Mucosa of descending colon (tissue), 3 donors: ENCODE measurements at regions of chr10 and their contacts with region 1.

Region 1: DNA sequence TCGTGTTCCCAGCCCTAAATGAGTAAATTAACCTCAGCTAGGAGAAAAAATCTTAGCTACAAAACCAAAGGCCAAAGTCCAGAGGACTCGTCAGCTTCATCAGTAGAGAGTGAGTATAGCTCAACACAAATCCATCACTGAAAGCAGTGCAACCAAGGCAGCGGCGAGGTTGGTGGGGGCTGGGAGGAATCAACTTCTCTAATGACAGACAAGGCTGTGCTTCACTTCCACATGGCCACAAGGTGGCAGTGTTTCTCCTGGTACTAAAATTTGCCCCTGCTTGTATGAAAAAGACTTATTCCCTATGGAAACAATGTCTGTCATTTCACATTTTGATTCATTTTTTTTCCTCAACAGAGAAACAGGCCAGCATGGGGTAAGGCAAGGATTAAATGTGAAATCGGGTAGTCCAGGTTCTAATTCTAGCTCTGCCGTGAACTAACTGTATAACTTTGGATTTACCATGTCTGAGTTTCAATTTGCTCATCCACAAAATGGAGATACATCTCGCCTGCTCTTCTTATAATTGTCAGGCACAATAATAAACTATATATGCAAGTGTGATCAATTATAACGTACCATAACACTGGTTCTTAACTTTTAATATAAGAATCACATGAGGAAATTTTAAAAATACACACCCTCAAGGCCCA is 39.3 kb downstream of the FAS start:
- DNase-seq: peak; percentile 55 to 78 (median 58)
- ATAC-seq: peak; percentile 85
- H3K4me3 ChIP-seq: no peak overlapping the region
- H3K4me1 ChIP-seq: peaks cover 6% of the 10 kb centered on the region
- CTCF ChIP-seq: peak; percentile 81

Region 2: DNA sequence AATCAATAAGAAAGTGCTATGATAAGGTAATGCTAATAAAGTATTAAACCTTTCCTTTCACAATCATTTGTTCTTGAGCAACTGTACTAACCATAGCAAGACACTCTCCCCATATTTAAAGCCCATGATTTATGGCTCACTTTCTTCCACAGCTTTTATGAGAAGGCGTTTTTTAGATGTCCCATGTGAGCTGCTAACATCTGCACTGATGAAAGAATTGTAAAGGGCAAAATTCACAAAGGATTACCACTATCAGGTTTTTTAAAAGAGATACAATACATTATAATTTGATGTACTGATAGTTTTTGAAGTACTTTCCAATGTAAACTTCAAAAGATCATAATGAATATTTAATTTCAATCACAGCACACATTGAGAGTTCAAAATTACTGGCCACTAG is 522.5 kb before region 1 on chr10:
- intact Hi-C with region 1: no loop called
- DNase-seq: no peak
- ATAC-seq: no peak
- H3K4me3 ChIP-seq: no peak overlapping the region
- H3K4me1 ChIP-seq: no peaks in the 10 kb centered on the region
- CTCF ChIP-seq: no peak

Region 3: GRCh38 chr10:89147256-89147655 is 117.3 kb after region 1 on chr10:
- intact Hi-C with region 1: no loop called
- DNase-seq: no peak
- ATAC-seq: no peak
- H3K4me3 ChIP-seq: no peak overlapping the region
- H3K4me1 ChIP-seq: no peaks in the 10 kb centered on the region
- CTCF ChIP-seq: no peak

Region 4: DNA sequence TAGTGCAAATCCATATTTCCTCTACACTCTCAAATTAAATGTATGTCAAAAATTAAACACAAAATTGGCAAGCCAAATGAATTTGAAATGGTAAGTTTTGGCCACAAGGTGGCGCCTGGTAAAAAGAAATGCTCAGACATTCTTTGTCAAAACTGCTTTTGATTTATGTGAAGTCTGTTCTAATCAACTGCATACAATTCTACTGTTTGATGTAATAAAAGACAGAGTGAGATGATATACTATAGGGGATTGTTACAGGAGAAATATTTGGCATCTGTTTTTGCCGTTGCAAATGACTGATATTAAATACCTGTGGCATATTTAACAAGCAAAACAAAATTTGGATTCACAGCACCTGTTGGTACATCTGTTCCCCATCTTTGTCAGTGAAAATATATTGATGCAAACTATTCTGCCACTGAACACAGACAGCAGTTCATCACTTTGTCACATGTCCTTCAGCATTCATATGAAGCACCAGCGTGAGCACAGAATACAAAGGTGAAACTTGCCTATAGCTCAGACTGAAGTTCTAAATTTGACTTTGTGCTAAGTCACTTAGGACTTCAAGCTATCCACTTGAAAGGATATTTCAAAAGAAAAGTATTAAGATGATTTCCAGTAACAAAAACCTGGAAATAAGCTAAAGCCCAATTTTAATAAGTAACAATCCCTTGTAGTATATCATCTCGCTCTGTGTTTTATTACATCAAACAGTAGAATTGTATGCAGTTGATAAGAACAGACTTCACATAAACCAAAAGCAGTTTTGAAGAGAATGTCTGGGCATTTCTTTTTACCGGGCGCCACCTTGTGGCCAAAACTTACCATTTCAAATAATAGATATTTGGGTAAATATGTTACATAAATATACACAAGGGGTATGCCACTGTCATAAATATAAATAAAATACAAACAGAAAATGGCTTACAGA is 187.4 kb after region 1 on chr10:
- intact Hi-C with region 1: loop called (anchors 5 kb)
- DNase-seq: peak in 2 of 3 donors; percentile 44 to 84
- ATAC-seq: peak; percentile 66
- H3K4me3 ChIP-seq: no peak overlapping the region
- H3K4me1 ChIP-seq: peaks cover 8% of the 10 kb centered on the region
- CTCF ChIP-seq: peak; percentile 58